Transverse colon (tissue), 4 donors: ENCODE measurements at regions of chr16 and their contacts with region 1.

Region 1: DNA sequence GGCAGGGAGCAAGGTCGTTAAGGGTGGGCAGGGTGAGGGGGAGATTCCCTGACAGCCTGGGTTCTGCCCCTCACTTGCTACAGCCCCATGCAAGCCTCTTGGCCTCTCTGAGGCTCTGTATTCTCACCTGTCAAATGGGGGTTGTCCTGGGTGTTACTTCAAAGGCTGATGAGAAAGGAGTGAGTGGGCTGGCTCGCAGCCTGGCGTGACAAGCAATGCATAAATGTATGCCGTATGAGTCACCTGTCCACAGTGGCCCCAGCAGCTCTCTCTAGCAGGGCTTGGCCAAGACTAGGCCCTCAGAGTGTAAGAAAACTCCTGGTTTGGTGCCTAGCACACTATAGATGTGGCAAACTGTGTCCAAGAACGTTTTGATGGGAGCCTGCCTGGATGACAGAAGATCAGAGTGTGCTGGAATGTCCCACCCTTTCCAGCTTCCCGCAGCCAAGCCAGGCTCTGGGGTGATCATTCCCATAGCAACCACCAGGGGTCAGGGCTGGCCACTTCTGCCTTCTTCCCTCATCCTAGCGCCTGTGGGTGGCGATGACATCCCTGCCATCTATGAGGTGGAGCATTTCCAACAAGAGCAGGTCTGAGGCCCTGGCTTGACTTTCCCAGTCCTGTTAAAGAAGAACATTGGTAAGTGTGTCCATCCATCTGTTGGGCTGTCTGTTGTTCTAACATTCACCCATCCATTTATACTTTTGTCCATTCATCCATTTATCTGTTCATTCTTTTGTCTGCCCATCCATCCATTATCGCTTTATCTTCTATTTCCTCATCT is 37.2 kb upstream of the ADGRG1 start:
- DNase-seq: peak; percentile 76
- H3K4me3 ChIP-seq: no peak overlapping the region
- H3K27ac ChIP-seq: no peak overlapping the region
- H3K4me1 ChIP-seq: peaks cover 0 to 3% (median 2%) of the 10 kb centered on the region in 4 donors
- H3K27me3 ChIP-seq: peaks cover 6% of the 10 kb centered on the region
- CTCF ChIP-seq: peak; percentile 72 to 88 (median 88)
- EP300 ChIP-seq: no peak
- POLR2A ChIP-seq: no peak

Region 2: GRCh38 chr16:57648590-57649442 is 57.5 kb after region 1 on chr16:
- in situ Hi-C with region 1: loop called in 2 of 4 experiments (anchors 10 kb)
- intact Hi-C with region 1: loop called (anchors 5 kb)
- DNase-seq: peak; percentile 86
- H3K4me3 ChIP-seq: no peak overlapping the region
- H3K27ac ChIP-seq: peak overlapping the region in 1 of 4 donors; percentile 2
- H3K4me1 ChIP-seq: peaks cover 0 to 5% (median under 1%) of the 10 kb centered on the region in 4 donors
- H3K27me3 ChIP-seq: no peaks in the 10 kb centered on the region
- CTCF ChIP-seq: peak; percentile 98 to 100 (median 100)
- EP300 ChIP-seq: no peak
- POLR2A ChIP-seq: no peak

Region 3: GRCh38 chr16:57653936-57654335 is 62.7 kb after region 1 on chr16:
- in situ Hi-C with region 1: loop called in 2 of 4 experiments (anchors 10 kb)
- intact Hi-C with region 1: loop called (anchors 5 kb)
- DNase-seq: no peak
- H3K4me3 ChIP-seq: no peak overlapping the region
- H3K27ac ChIP-seq: no peak overlapping the region
- H3K4me1 ChIP-seq: no peaks in the 10 kb centered on the region
- H3K27me3 ChIP-seq: no peaks in the 10 kb centered on the region
- CTCF ChIP-seq: no peak
- EP300 ChIP-seq: no peak
- POLR2A ChIP-seq: no peak

Region 4: DNA sequence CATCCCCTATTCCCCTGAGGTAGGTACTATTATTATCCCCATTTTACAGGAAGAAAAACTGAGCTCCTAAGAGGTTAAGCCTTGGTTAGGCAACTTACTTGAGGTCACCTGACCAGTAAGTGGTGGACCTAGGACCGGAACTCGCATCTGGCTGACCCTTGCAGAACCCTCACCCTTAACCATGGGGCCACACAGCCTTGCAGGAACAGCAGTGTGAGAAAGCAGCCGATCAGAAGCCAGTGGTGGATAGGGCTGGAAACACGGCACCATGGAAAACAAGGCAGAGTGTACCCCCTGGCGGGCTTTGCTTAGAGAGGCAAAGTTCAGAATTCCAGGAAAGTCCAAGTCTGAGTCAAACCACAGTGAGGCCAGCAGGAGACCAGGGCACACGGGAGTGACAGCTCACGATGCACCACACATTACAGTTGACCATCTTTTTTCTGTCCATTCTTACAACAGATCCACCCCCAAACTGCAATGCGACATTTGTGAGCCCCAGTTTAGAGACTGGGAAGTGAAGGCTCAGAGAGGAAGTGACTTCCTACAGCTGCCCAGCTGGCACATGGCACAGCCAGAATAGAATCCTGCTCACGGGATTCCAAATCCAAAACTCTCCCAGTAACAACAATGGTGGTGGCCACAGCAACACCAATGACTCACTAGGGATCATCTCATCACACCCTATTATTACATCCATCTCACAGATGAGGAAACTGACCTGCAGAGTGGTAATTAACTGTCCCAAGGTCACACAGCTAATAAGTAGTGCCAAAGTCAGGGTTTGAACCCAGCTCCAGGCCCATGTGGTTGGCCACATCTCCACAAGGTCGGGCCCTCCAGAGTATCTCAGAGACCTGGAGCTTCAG is 190.7 kb after region 1 on chr16:
- in situ Hi-C with region 1: no loop called
- intact Hi-C with region 1: no loop called
- DNase-seq: no peak
- H3K4me3 ChIP-seq: no peak overlapping the region
- H3K27ac ChIP-seq: no peak overlapping the region
- H3K4me1 ChIP-seq: peaks cover 0 to 5% (median 0%) of the 10 kb centered on the region in 4 donors
- H3K27me3 ChIP-seq: no peaks in the 10 kb centered on the region
- CTCF ChIP-seq: no peak
- EP300 ChIP-seq: no peak
- POLR2A ChIP-seq: no peak